Naive thymus-derived CD4-positive, alpha-beta T cell (primary cell): ENCODE measurements at regions of chr1 and their contacts with region 1.

Region 1: DNA sequence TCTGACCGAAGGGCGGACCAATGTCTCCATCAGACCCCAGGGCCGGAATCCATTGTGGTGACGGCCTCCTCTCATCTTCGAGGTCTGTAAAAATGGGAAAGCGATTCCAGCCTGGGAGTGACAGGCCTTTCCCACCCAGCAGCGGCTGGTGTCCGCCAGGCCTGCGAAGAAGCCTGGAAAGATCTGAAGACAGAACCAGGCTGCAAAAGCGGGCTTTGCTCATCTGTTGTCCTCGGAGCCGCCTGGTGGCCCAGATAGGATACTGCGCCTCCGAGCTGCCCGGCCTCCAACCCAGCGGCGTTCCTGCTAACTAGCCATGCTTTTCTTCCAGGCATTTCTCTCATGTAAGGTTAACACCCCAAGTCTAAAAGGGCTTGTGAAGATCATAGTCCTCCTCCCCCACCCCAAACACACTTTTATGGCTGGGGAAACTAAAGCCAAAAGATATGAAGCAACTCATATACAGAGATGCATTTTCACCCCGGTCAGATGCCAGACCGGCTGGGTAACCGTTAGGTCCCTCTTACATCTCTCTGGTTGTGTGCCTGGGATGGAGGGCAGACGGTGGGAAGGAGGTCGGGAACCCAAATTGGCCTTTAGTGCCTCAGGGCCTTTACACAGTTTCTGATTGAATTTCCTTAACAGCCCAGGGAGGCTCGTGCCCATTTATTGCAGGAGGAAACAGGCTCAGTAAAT is 1.9 kb upstream of the DHRS3 start:
- DNase-seq: peak; percentile 64 to 83 (median 74)
- ATAC-seq: peak; percentile 69
- H3K4me3 ChIP-seq: peak overlapping the region; percentile 81
- H3K4me3 Mint-ChIP-seq: peak overlapping the region; percentile 90 to 99 (median 99)
- H3K27ac ChIP-seq: peak overlapping the region; percentile 86
- H3K27ac Mint-ChIP-seq: peak overlapping the region; percentile 62 to 98 (median 94)
- H3K4me1 ChIP-seq: peaks cover 22 to 35% of the 10 kb centered on the region in 2 donors
- H3K4me1 Mint-ChIP-seq: peaks cover 27 to 41% (median 38%) of the 10 kb centered on the region in 7 donors
- H3K27me3 ChIP-seq: no peaks in the 10 kb centered on the region
- H3K27me3 Mint-ChIP-seq: peaks cover 0 to 13% (median 0%) of the 10 kb centered on the region in 5 donors

Region 2: DNA sequence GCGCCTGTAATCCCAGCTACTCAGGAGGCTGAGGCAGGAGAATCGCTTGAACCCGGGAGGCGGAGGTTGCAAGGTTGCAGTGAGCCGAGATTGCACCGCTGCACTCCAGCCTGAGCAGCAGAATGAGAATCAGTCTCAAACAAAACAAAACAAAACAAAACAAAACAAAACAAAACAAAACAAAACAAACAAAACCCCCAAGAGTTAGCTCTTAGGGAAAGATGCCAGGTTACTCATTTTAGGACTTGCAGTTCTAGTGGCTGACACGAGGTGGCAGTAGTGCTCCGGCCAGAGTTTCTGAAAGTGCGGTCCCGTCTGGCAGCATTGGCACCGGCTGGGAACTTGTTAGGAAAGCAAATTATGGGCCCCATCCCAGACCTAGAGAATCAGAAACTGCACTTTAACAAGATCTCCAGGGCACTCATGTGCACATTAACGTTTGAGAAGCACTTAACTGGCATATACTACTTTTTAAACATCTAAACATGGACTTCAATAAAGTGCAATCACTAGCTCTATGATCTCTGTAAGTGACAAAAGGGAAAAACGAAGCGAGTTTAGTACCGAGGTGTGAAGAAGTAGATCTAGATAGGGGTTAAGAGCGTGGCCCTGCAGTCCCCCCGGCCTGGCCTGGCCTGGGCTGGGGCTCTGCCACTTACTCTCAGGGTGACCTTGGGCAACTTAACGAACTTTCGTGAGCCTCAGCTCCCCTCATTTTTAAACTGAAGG is 495.1 kb before region 1 on chr1:
- CTCF ChIA-PET with region 1: no interaction called
- POLR2A ChIA-PET with region 1: no interaction called
- intact Hi-C with region 1: loop called in 1 of 2 experiments (anchors 2 kb)
- DNase-seq: peak; percentile 62 to 88 (median 76)
- ATAC-seq: peak; percentile 86
- H3K4me3 ChIP-seq: no peak overlapping the region
- H3K4me3 Mint-ChIP-seq: peak overlapping the region in 8 of 10 donors; percentile 24 to 65 (median 39)
- H3K27ac ChIP-seq: no peak overlapping the region
- H3K27ac Mint-ChIP-seq: peak overlapping the region in 8 of 9 donors; percentile 2 to 92 (median 46)
- H3K4me1 ChIP-seq: peaks cover 16 to 17% of the 10 kb centered on the region in 2 donors
- H3K4me1 Mint-ChIP-seq: peaks cover 39 to 46% (median 42%) of the 10 kb centered on the region in 7 donors
- H3K27me3 ChIP-seq: no peaks in the 10 kb centered on the region
- H3K27me3 Mint-ChIP-seq: no peaks in the 10 kb centered on the region

Region 3: DNA sequence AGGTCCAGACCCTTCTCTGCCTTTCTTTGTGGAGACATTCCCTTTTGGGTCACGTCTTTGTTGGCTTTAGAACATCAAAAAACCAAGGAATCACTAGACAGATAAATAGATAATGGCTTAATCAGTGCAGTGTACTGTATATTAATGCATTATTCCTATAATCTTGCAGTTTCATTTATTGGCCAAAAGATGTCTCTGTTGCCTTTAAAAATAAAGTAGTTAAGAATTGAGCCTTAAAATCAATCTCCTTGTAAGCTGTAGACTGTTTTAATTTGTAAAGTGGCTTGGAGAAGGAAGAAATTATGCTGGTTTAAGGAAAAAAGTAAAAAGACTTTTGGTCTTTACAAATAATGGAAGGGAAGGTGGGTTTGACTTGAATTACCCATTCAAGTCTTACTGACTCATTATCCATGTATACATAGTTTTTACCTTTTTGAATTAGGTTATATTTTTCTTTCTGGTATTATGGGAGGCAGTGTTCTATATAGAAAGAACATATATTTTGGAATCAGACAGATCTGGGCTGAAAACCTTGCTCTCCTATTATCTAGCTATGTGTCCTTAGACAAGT is 305.5 kb before region 1 on chr1:
- CTCF ChIA-PET with region 1: interaction called, 19 read pairs
- POLR2A ChIA-PET with region 1: no interaction called
- intact Hi-C with region 1: loop called (anchors 1 kb)
- DNase-seq: peak in 5 of 9 donors; percentile 8 to 41 (median 17)
- ATAC-seq: no peak
- H3K4me3 ChIP-seq: no peak overlapping the region
- H3K4me3 Mint-ChIP-seq: no peak overlapping the region
- H3K27ac ChIP-seq: no peak overlapping the region
- H3K27ac Mint-ChIP-seq: no peak overlapping the region
- H3K4me1 ChIP-seq: no peaks in the 10 kb centered on the region
- H3K4me1 Mint-ChIP-seq: peaks cover 0 to 5% (median 0%) of the 10 kb centered on the region in 7 donors
- H3K27me3 ChIP-seq: no peaks in the 10 kb centered on the region
- H3K27me3 Mint-ChIP-seq: no peaks in the 10 kb centered on the region

Region 4: DNA sequence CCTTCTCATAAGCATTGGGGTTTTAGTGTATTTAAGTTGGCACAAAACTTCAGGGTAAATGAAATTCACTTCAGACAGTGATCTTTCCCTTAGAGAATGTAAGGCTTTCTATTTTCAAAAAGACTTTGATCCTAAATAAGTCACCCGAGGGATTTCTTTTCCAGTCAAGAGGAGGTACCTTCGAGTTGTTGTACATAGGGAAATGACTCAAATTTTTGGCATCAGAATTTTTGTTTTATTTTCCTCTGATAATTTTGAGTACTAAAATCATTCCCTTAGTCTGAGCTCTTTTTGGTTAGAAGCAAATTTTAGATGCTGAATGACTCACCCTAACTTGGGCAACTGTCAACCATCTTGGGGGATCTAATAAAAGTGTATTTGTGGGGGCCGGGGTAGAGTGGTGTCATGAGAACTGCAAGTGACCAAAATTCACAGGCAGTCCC is 195.8 kb before region 1 on chr1:
- CTCF ChIA-PET with region 1: interaction called, 4 read pairs
- POLR2A ChIA-PET with region 1: interaction called, 5 read pairs
- intact Hi-C with region 1: loop called in 1 of 2 experiments (anchors 5 kb)
- DNase-seq: no peak
- ATAC-seq: no peak
- H3K4me3 ChIP-seq: no peak overlapping the region
- H3K4me3 Mint-ChIP-seq: no peak overlapping the region
- H3K27ac ChIP-seq: no peak overlapping the region
- H3K27ac Mint-ChIP-seq: peak overlapping the region in 2 of 9 donors; percentile 43 to 57
- H3K4me1 ChIP-seq: peaks cover 0 to 4% of the 10 kb centered on the region in 2 donors
- H3K4me1 Mint-ChIP-seq: peaks cover 14 to 45% (median 31%) of the 10 kb centered on the region in 7 donors
- H3K27me3 ChIP-seq: no peaks in the 10 kb centered on the region
- H3K27me3 Mint-ChIP-seq: no peaks in the 10 kb centered on the region

Region 5: GRCh38 chr1:12472798-12473551 is 147.0 kb before region 1 on chr1:
- CTCF ChIA-PET with region 1: interaction called, 6 read pairs
- POLR2A ChIA-PET with region 1: interaction called, 11 read pairs
- intact Hi-C with region 1: loop called (anchors 1 to 10 kb)
- DNase-seq: peak in 8 of 9 donors; percentile 54 to 67 (median 60)
- ATAC-seq: peak; percentile 77
- H3K4me3 ChIP-seq: peak overlapping the region; percentile 11
- H3K4me3 Mint-ChIP-seq: peak overlapping the region; percentile 72 to 86 (median 78)
- H3K27ac ChIP-seq: peak overlapping the region; percentile 67
- H3K27ac Mint-ChIP-seq: peak overlapping the region; percentile 94 to 99 (median 96)
- H3K4me1 ChIP-seq: peaks cover 51 to 87% of the 10 kb centered on the region in 2 donors
- H3K4me1 Mint-ChIP-seq: peaks cover 53 to 96% (median 91%) of the 10 kb centered on the region in 7 donors
- H3K27me3 ChIP-seq: no peaks in the 10 kb centered on the region
- H3K27me3 Mint-ChIP-seq: no peaks in the 10 kb centered on the region

Region 6: DNA sequence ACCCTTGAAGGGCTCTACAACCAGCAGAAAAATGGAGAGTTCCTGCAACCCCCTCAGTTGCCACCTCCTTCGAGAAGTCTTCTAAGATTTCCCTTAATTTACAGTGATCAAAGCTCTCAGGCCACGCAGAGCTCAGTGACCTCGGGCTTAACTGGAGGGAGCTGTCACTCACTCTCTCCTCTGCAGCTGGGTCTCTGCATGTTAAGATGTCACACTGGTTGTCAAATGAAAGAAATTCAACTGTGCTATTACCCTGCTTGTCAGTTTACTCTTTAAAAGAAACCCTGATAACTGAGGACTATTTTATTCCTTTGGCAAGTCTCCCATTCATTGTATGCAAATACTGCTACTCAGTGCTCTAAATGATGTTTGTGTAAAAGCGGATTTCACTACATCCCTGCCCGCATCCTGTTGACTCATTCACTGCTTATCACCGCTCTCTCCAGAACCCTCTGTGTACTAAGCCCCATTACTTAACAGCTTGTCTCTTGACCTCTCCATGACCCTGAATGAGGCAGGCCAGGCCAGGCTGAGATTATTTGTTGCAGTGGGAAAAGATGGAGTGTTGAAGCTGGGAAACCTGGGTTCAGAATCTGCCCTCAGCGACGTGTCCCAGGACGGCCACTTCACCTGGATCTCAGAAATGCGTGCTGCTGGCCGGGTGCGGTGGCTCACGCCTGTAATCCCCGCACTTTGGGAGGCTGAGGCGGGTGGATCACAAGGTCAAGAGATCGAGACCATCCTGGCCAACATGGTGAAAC is 15.6 kb before region 1 on chr1:
- CTCF ChIA-PET with region 1: interaction called, 110 read pairs
- POLR2A ChIA-PET with region 1: interaction called, 204 read pairs
- intact Hi-C with region 1: loop called (anchors 1 kb)
- DNase-seq: peak in 8 of 9 donors; percentile 36 to 78 (median 68)
- ATAC-seq: peak; percentile 90
- H3K4me3 ChIP-seq: no peak overlapping the region
- H3K4me3 Mint-ChIP-seq: peak overlapping the region; percentile 25 to 75 (median 68)
- H3K27ac ChIP-seq: peak overlapping the region; percentile 41
- H3K27ac Mint-ChIP-seq: peak overlapping the region; percentile 78 to 97 (median 88)
- H3K4me1 ChIP-seq: peaks cover 27 to 50% of the 10 kb centered on the region in 2 donors
- H3K4me1 Mint-ChIP-seq: peaks cover 23 to 94% (median 82%) of the 10 kb centered on the region in 7 donors
- H3K27me3 ChIP-seq: no peaks in the 10 kb centered on the region
- H3K27me3 Mint-ChIP-seq: peaks cover 0 to 2% (median 0%) of the 10 kb centered on the region in 5 donors